ENCODE measurements at regions of chr9 and their contacts with region 1.

Region 1: DNA sequence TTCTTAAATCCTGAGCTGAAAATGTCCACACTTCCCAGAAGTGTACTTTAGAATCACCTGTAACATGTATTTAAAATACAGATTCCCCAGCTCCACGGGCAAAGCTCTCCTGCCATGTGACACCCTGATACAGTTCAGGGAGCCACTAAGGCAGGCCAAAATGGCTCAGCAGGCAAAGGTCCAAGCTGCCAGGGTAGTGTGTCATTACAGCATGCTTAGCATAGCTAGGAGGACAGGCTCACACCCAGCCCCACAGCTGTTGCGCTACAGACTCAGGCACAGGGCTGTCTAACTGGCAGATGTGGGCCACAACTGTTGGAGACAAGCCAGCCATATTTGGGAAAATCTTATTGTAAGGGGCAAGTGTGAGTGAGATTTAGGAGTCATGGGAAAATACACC is 73.0 kb downstream of the C9orf85 start:
- DNase-seq: no peak
- H3K4me3 Mint-ChIP-seq: no peak overlapping the region
- H3K27ac Mint-ChIP-seq: no peak overlapping the region
- H3K4me1 Mint-ChIP-seq: peaks cover 14% of the 10 kb centered on the region
- H3K27me3 Mint-ChIP-seq: no peaks in the 10 kb centered on the region
- CTCF ChIP-seq: no peak

Region 2: DNA sequence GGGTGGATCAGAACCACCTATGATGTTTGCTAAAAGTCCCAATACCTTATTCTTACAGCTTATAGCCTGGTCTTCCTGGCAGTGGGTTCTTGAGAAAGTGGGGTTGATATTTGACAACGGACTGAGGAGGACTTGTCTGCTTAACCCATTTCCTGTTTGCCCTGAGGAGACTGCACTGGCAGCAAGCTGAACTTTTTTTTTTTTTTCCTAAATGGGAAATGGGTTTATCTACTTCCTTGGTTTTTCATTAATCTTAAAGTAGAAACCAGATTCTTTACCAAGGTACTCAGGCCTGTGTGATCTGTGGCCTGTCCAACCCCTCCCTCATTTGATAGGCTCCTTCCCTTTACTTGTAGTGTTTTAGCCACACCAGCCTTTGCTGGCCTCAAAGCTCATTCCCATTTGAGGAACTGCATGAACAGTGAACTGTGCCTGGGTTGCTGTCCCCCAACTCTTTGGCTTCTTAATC is 28.9 kb after region 1 on chr9:
- CTCF ChIA-PET with region 1: interaction called, 11 read pairs
- intact Hi-C with region 1: no loop called
- DNase-seq: peak; percentile 25
- H3K4me3 Mint-ChIP-seq: peak overlapping the region; percentile 21
- H3K27ac Mint-ChIP-seq: peak overlapping the region; percentile 90
- H3K4me1 Mint-ChIP-seq: peaks cover 24% of the 10 kb centered on the region
- H3K27me3 Mint-ChIP-seq: no peaks in the 10 kb centered on the region
- CTCF ChIP-seq: no peak

Region 3: DNA sequence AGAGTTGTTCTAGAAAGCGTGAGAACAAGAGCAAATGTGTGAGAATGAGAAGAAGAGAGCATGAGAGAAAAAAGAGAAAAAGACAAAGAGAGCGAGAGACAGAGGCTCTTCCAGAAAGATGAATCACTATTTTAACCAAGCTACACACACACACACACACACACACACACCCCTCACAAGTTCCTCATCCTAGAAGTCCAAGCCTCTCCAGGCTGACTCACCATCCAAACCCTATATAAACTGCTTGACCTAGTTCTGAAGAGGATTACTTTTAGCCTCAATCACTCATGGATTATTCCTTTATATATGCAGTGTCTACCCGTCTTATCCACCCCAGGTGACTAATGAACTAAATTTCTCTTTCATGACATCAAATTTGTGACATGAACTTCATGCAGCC is 38.4 kb after region 1 on chr9:
- CTCF ChIA-PET with region 1: interaction called, 42 read pairs
- intact Hi-C with region 1: loop called (anchors 1 kb)
- DNase-seq: no peak
- H3K4me3 Mint-ChIP-seq: no peak overlapping the region
- H3K27ac Mint-ChIP-seq: peak overlapping the region; percentile 3
- H3K4me1 Mint-ChIP-seq: peaks cover 20% of the 10 kb centered on the region
- H3K27me3 Mint-ChIP-seq: no peaks in the 10 kb centered on the region
- CTCF ChIP-seq: no peak